ENCODE measurements at regions of chr6 and their contacts with region 1.

Region 1: GRCh38 chr6:111709615-111710398 is 104.1 kb upstream of the TRAF3IP2 start:
- ATAC-seq: peak; percentile 70 to 98 (median 80)
- H3K4me3 ChIP-seq: no peak overlapping the region
- H3K27ac ChIP-seq: no peak overlapping the region
- H3K4me1 ChIP-seq: peaks cover 16 to 25% of the 10 kb centered on the region in 2 donors

Region 2: GRCh38 chr6:111997078-111997852 is 287.5 kb after region 1 on chr6:
- in situ Hi-C with region 1: loop called in 6 of 9 experiments (anchors 10 to 25 kb)
- ATAC-seq: peak; percentile 90 to 97 (median 94)
- H3K4me3 ChIP-seq: peak overlapping the region in 1 of 5 donors; percentile 7
- H3K27ac ChIP-seq: peak overlapping the region; percentile 0 to 45
- H3K4me1 ChIP-seq: peaks cover 21% of the 10 kb centered on the region in 2 donors

Region 3: DNA sequence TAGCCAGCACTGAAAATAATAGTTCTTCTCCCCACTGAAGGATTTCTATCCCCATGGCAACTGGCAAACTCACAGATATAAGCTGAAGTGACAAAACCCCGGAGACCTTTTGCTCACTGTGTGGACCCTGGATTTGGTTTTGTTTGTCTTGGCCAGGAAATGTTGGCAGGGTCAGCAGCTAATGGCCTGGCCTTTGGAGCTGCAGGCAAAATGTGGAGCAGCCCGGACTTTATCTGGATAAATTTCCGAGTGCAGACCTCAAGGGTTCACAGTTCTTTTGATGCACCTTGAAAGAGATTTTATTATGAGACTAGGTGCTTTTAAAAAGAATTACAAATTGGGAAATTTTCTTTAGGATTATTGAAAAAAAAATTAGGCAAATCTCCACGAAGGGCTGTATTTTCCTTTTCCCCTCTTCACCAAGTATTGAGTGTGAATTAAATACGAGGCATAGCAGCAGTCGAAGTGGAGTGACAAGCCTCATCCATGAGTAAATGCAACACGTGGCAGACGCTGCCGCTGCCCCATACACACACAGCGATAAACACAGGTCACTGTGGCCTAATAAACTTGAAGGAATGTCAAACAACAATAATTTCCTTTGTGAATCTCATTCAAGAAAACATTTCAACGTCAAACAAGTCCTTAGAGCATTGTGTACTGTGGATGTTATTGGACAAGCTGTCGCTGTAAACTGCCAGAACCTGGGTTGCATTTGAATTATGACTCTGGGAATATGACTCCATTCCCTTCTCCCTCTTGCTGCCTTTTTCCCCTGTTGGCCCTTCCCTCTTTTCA is 309.0 kb after region 1 on chr6:
- in situ Hi-C with region 1: loop called in 2 of 9 experiments (anchors 25 kb)
- ATAC-seq: peak in 5 of 8 experiments; percentile 46 to 53 (median 49)
- H3K4me3 ChIP-seq: no peak overlapping the region
- H3K27ac ChIP-seq: no peak overlapping the region
- H3K4me1 ChIP-seq: peaks cover 18 to 19% of the 10 kb centered on the region in 2 donors

Region 4: DNA sequence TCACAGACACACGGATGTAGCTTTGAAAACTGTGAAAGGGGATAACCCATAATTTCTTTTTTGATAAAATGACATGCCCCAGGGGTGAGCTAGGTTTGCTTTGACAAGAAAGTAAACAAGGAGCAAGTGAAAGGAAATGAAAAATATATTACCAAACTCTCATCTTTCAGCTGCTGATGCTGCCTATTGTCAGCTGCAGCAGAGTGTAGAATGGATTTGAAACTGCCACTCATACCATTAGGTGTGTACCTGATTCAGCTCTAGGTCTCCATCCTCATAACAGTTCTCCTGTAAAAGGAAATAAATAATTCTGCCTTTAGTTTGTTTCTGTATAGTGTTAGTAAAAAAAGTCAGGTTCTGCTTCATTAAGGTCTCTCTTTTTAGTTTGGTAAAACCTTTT is 1732.2 kb after region 1 on chr6:
- in situ Hi-C with region 1: no loop called
- ATAC-seq: no peak
- H3K4me3 ChIP-seq: no peak overlapping the region
- H3K27ac ChIP-seq: no peak overlapping the region
- H3K4me1 ChIP-seq: no peaks in the 10 kb centered on the region

Measured in motor neuron (in vitro differentiated cells).